ENCODE measurements at regions of chr15 and their contacts with region 1.

Region 1: GRCh38 chr15:89472785-89473256 is 23.6 kb downstream of the RHCG start:
- H3K4me3 ChIP-seq: no peak overlapping the region
- H3K27ac ChIP-seq: no peak overlapping the region
- H3K4me1 ChIP-seq: no peaks in the 10 kb centered on the region
- CTCF ChIP-seq: peak; percentile 90

Region 2: DNA sequence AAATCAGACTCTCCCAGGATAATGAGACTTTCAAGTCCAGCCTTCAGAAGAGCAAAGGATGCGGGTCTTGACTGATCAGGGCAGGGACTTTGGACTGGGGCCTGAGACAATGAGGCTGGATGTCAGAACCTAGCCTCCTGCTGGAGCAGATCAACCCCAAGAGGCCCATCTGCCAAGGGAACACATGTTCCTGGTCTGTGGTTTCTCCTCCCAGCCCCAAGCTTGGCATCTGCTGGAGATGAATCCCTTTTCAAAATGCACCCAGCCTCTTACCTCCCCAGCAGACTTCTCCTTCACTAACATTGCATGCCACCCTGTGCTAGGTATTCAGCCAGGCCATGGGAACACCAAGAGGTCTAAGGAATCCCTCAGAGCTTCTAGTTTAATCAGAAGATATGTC is 515.9 kb before region 1 on chr15:
- CTCF ChIA-PET with region 1: no interaction called
- POLR2A ChIA-PET with region 1: no interaction called
- H3K4me3 ChIP-seq: no peak overlapping the region
- H3K27ac ChIP-seq: no peak overlapping the region
- H3K4me1 ChIP-seq: no peaks in the 10 kb centered on the region
- CTCF ChIP-seq: no peak

Region 3: DNA sequence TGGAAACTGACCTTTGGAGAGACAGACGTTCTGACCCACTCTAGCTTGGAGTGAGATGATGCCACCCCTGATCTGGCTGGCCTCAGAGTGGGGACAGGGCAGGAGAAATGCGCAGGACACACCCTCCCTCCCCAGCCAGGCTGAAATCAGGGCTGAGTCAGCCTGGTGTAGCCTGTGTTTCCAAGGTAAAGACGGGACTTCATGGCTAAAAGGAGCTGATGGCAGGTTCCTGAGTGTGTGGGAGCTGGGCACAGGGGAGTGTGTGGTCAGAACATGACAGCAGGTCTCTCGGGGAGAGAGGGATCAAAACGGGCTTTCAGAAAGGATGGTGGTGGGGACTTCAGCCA is 123.6 kb before region 1 on chr15:
- CTCF ChIA-PET with region 1: interaction called, 10 read pairs
- POLR2A ChIA-PET with region 1: no interaction called
- H3K4me3 ChIP-seq: no peak overlapping the region
- H3K27ac ChIP-seq: no peak overlapping the region
- H3K4me1 ChIP-seq: no peaks in the 10 kb centered on the region
- CTCF ChIP-seq: no peak

Region 4: GRCh38 chr15:89399238-89400120 is 73.3 kb before region 1 on chr15:
- CTCF ChIA-PET with region 1: interaction called, 12 read pairs
- POLR2A ChIA-PET with region 1: no interaction called
- H3K4me3 ChIP-seq: peak overlapping the region; percentile 45
- H3K27ac ChIP-seq: peak overlapping the region; percentile 66; the same call in 1 of the 2 replicates
- H3K4me1 ChIP-seq: peaks cover 8% of the 10 kb centered on the region
- CTCF ChIP-seq: peak; percentile 85

Region 5: GRCh38 chr15:89430530-89431341 is 42.1 kb before region 1 on chr15:
- CTCF ChIA-PET with region 1: interaction called, 20 read pairs
- POLR2A ChIA-PET with region 1: no interaction called
- H3K4me3 ChIP-seq: peak overlapping the region; percentile 18; the same call in 1 of the 2 replicates
- H3K27ac ChIP-seq: no peak overlapping the region
- H3K4me1 ChIP-seq: no peaks in the 10 kb centered on the region
- CTCF ChIP-seq: peak; percentile 95

Region 6: GRCh38 chr15:89442671-89443307 is 30.0 kb before region 1 on chr15:
- CTCF ChIA-PET with region 1: interaction called, 234 read pairs
- POLR2A ChIA-PET with region 1: no interaction called
- H3K4me3 ChIP-seq: no peak overlapping the region
- H3K27ac ChIP-seq: no peak overlapping the region
- H3K4me1 ChIP-seq: no peaks in the 10 kb centered on the region
- CTCF ChIP-seq: peak; percentile 61; the same call in 1 of the 2 replicates

Region 7: GRCh38 chr15:89462331-89462912 is 10.4 kb before region 1 on chr15:
- CTCF ChIA-PET with region 1: interaction called, 11 read pairs
- POLR2A ChIA-PET with region 1: no interaction called
- H3K4me3 ChIP-seq: no peak overlapping the region
- H3K27ac ChIP-seq: no peak overlapping the region
- H3K4me1 ChIP-seq: no peaks in the 10 kb centered on the region
- CTCF ChIP-seq: no peak

Region 8: GRCh38 chr15:89485855-89486361 is 13.1 kb after region 1 on chr15:
- CTCF ChIA-PET with region 1: interaction called, 30 read pairs
- POLR2A ChIA-PET with region 1: no interaction called
- H3K4me3 ChIP-seq: no peak overlapping the region
- H3K27ac ChIP-seq: no peak overlapping the region
- H3K4me1 ChIP-seq: no peaks in the 10 kb centered on the region
- CTCF ChIP-seq: no peak

Region 9: DNA sequence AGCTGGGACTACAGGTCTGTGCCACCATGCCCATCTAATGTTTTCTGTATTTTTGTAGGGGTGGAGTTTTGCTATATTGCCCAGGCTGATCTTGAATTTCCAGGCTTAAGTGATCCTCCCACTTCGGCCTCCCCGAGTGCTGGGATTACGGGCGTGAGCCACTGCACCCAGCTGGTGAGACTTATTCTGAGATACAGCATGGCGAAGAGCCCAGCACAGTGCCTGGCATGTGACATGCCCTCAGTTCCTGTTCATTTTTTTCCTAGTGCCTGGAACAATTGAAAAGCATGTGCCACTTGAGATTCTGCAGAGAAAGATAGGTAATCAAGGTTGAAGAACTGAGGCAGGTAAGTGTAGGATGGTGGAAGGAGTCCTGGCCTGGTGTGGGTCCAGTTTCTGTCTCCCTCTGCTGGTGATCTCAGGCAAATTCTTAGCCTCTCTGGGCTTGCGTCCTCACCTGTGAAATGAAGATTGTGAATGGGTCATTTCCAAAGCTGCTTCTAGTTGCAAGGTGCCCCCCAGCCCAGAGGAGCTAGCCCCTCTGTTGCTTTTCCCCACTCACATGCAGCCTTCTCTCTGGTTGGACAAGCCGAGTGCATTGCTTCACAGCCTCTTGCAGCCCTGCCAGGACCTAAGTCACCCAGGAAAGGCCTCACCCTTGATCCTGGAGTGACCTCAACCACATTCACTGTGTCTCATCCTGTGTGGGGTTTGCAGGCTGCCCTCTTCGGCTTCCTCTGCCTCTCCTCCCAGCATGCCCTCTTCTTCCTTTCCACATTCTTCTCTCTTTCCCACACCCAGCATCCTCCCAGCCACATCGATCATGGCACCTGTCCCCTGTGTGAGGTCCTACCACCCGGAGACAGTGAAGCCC is 27.8 kb after region 1 on chr15:
- CTCF ChIA-PET with region 1: no interaction called
- POLR2A ChIA-PET with region 1: no interaction called
- H3K4me3 ChIP-seq: no peak overlapping the region
- H3K27ac ChIP-seq: no peak overlapping the region
- H3K4me1 ChIP-seq: no peaks in the 10 kb centered on the region
- CTCF ChIP-seq: peak; percentile 27; the same call in 1 of the 2 replicates

Region 10: DNA sequence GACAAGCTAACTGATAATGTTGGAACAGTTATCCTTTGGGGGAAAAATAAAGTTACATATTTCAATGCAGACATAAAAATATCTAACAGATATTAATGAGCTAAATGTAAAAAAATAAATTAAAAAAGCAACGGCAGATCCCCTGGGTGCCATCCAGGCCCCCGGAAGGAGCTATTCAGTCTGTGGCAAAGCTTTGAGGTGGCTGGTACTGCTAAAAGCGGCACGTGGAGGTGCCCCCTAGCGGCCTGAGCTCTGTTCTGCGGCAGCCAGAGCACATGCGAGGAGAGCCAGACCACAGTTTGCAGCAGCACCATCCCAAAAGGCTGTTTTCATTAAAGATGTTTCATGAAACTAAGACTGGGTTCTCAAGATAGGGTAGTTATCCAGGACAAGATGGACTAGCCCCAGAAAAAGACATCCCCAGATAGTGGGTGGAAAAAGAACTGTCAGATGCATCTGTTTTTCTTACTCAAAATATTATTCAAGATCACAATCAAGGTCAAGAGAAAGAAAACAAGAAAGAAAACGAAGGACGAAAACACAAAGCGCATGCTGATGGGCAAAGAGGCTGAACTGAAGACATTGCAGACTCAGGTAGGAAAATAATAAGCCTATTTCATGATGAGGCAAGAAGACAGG is 402.2 kb after region 1 on chr15:
- CTCF ChIA-PET with region 1: no interaction called
- POLR2A ChIA-PET with region 1: no interaction called
- H3K4me3 ChIP-seq: no peak overlapping the region
- H3K27ac ChIP-seq: no peak overlapping the region
- H3K4me1 ChIP-seq: no peaks in the 10 kb centered on the region
- CTCF ChIP-seq: peak; percentile 71

Measured in HEK293 (cell line).